Common myeloid progenitor, CD34-positive (primary cell): ENCODE measurements at regions of chr11 and their contacts with region 1.

Region 1: DNA sequence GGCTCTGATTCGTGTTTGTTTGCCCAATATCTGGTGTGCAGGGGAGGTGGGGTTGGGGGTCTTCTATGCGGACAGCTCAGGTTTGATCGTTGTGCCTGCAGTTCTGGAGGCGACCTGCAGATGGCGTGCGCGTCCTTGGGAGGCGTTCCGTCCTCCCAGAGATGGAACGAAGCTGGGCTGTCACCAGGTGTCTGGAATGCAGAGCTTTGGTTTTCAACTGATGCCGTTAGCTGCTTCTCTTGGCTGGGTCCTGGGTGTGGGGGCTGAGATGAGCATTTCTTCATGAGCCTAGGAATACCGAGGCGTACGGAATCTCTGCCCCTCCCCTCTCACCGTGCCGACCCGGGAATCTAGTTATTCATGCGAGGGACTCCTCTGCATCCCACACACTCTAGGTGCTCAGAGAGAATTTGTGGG is 98.6 kb downstream of the CEP164 start:
- DNase-seq: peak; percentile 41 to 62 (median 50)
- H3K4me3 ChIP-seq: no peak overlapping the region
- H3K27ac ChIP-seq: no peak overlapping the region
- H3K4me1 ChIP-seq: no peaks in the 10 kb centered on the region
- H3K27me3 ChIP-seq: peaks cover 0 to 5% (median 0%) of the 10 kb centered on the region in 5 experiments

Region 2: GRCh38 chr11:117249571-117249970 is 176.7 kb before region 1 on chr11:
- CTCF ChIA-PET with region 1: no interaction called
- POLR2A ChIA-PET with region 1: no interaction called
- DNase-seq: no peak
- H3K4me3 ChIP-seq: no peak overlapping the region
- H3K27ac ChIP-seq: no peak overlapping the region
- H3K4me1 ChIP-seq: no peaks in the 10 kb centered on the region
- H3K27me3 ChIP-seq: no peaks in the 10 kb centered on the region

Region 3: DNA sequence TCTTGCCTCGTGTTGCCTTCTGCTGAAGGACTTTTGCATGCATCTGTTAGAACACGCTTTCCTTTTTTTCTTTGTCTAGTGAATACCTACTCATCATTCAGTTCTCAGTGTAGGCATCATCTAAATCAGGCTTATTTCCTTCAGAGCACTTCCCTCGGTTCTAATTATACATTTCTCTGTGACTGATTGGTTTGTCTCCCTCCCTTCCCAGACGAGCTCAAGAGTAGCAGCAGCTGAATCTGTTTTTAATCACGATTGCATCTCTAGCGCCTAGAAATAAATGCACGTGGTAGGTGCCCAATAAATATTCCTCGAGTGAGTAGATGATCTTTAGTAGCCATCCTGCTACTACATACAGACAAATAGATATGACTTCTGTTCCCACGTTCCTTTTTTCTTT is 92.4 kb before region 1 on chr11:
- CTCF ChIA-PET with region 1: no interaction called
- POLR2A ChIA-PET with region 1: no interaction called
- DNase-seq: no peak
- H3K4me3 ChIP-seq: no peak overlapping the region
- H3K27ac ChIP-seq: no peak overlapping the region
- H3K4me1 ChIP-seq: peaks cover 0 to 10% (median 5%) of the 10 kb centered on the region in 4 experiments
- H3K27me3 ChIP-seq: no peaks in the 10 kb centered on the region

Region 4: GRCh38 chr11:117410861-117411710 is 15.2 kb before region 1 on chr11:
- CTCF ChIA-PET with region 1: interaction called, 12 read pairs
- POLR2A ChIA-PET with region 1: no interaction called
- DNase-seq: no peak
- H3K4me3 ChIP-seq: no peak overlapping the region
- H3K27ac ChIP-seq: no peak overlapping the region
- H3K4me1 ChIP-seq: peaks cover 0 to 3% (median 0%) of the 10 kb centered on the region in 4 experiments
- H3K27me3 ChIP-seq: no peaks in the 10 kb centered on the region

Region 5: GRCh38 chr11:117443266-117444195 is 17.3 kb after region 1 on chr11:
- CTCF ChIA-PET with region 1: interaction called, 22 read pairs
- POLR2A ChIA-PET with region 1: no interaction called
- DNase-seq: peak; percentile 66 to 80 (median 79)
- H3K4me3 ChIP-seq: peak overlapping the region in 2 of 7 experiments; percentile 3 to 28
- H3K27ac ChIP-seq: no peak overlapping the region
- H3K4me1 ChIP-seq: peaks cover 0 to 7% (median 0%) of the 10 kb centered on the region in 4 experiments
- H3K27me3 ChIP-seq: peaks cover 0 to 13% (median 8%) of the 10 kb centered on the region in 5 experiments

Region 6: GRCh38 chr11:117458275-117458674 is 32.0 kb after region 1 on chr11:
- CTCF ChIA-PET with region 1: no interaction called
- POLR2A ChIA-PET with region 1: no interaction called
- DNase-seq: no peak
- H3K4me3 ChIP-seq: no peak overlapping the region
- H3K27ac ChIP-seq: no peak overlapping the region
- H3K4me1 ChIP-seq: no peaks in the 10 kb centered on the region
- H3K27me3 ChIP-seq: no peaks in the 10 kb centered on the region

Region 7: DNA sequence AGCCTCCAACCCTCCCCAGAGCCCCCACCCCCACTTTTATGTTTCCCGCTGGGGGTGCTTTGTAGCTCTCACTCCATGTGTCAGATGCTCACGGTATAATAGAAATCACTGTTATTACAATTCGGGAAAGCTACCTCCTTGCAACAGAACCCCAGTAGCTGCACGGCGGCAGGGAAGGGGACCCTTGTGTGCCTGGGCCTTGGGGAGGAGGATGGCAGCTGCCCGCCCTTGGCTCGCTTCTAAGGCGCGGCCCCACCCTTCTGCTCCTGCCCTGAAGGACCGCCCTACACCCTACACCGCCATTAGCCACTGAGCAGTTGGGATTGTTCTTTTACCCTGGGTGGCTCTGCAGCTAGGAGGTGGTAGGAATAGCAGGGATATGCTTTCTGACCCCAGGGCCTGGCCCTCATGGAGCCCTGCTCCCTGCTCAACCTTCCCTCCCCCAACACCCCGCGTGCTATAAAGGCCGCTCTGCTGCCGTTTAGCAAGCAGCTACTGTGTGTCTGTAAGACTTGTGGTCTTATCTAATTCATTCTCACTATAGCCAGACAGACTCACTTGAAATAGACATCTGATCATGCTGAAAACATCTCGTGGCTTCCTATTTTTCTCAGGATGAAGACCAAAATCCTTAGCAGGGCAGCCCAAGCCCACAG is 121.0 kb after region 1 on chr11:
- CTCF ChIA-PET with region 1: no interaction called
- POLR2A ChIA-PET with region 1: no interaction called
- DNase-seq: no peak
- H3K4me3 ChIP-seq: no peak overlapping the region
- H3K27ac ChIP-seq: no peak overlapping the region
- H3K4me1 ChIP-seq: no peaks in the 10 kb centered on the region
- H3K27me3 ChIP-seq: peaks cover 0 to 5% (median 0%) of the 10 kb centered on the region in 5 experiments